A673 (cell line): ENCODE measurements at regions of chr17 and their contacts with region 1.

Region 1: DNA sequence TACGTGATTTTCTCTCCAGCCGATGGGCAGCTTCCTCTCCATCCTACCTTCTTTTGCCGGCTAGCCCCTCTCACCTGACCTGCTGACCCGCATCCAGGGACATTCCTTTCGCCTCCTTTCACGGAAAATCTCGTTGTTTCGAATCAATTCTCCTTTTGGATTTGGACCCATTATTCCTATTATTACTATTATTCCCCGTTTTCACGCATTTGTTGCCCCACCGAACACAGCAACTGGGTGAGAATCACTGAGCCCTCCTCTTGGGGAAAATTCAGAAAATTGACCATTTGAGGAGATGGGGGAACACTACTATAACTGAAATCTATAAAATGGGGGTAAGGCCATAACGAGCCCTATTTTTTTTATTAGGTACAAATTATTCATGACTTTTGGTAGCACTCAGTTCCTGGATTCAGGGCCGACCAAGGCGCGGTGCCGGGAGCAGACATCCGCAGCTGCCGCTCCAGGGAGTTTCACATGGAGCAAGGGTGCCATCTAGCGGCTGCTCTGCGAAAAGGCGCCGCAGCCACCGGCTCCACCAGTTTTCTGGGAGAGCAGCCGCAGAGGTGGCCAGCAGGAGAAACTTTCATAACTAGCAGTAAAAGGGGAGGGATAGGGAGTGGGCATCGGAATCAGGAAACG is 3.3 kb upstream of the HOXB8 start:
- DNase-seq: peak; percentile 93
- H3K4me3 ChIP-seq: peak overlapping the region; percentile 49
- H3K27ac ChIP-seq: no peak overlapping the region
- H3K4me1 ChIP-seq: peaks cover 17% of the 10 kb centered on the region
- H3K27me3 ChIP-seq: no peaks in the 10 kb centered on the region
- CTCF ChIP-seq: peak; percentile 98

Region 2: GRCh38 chr17:48131216-48131824 is 487.1 kb before region 1 on chr17:
- CTCF ChIA-PET with region 1: interaction called, 3 read pairs
- POLR2A ChIA-PET with region 1: no interaction called
- intact Hi-C with region 1: loop called (anchors 2 kb)
- DNase-seq: peak; percentile 86
- H3K4me3 ChIP-seq: no peak overlapping the region
- H3K27ac ChIP-seq: no peak overlapping the region
- H3K4me1 ChIP-seq: no peaks in the 10 kb centered on the region
- H3K27me3 ChIP-seq: no peaks in the 10 kb centered on the region
- CTCF ChIP-seq: peak; percentile 92

Region 3: DNA sequence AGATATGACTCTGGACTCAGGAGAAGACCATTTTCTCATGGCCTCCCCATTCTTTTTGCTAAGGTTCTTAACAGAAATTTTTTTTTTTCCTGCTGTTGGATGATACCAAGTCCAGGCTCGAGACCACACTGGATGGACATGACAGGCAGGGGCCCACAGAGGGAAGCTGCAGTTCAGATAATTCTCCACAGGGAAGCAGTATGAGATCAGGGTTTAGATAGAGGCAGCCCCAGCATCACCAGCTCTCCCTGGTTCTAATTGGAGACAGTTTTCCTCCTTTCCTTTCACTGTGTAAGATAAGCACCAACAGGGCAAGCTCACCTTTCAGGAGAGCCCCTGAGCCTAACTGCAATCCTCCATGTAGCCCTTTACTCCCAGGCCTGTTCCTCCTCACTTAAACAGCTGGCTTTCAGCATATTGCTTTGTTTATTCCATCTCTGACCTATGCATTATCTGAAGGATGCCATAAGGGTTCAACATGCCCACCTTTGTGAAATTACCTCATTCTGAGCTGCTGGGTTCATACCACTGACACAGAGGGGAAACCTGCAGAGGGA is 402.7 kb before region 1 on chr17:
- CTCF ChIA-PET with region 1: no interaction called
- POLR2A ChIA-PET with region 1: no interaction called
- intact Hi-C with region 1: loop called (anchors 1 kb)
- DNase-seq: peak; percentile 74
- H3K4me3 ChIP-seq: no peak overlapping the region
- H3K27ac ChIP-seq: no peak overlapping the region
- H3K4me1 ChIP-seq: peaks cover 4% of the 10 kb centered on the region
- H3K27me3 ChIP-seq: no peaks in the 10 kb centered on the region
- CTCF ChIP-seq: peak; percentile 75

Region 4: GRCh38 chr17:48335858-48336500 is 282.4 kb before region 1 on chr17:
- CTCF ChIA-PET with region 1: interaction called, 3 read pairs
- POLR2A ChIA-PET with region 1: no interaction called
- intact Hi-C with region 1: loop called (anchors 5 kb)
- DNase-seq: peak; percentile 78
- H3K4me3 ChIP-seq: no peak overlapping the region
- H3K27ac ChIP-seq: no peak overlapping the region
- H3K4me1 ChIP-seq: no peaks in the 10 kb centered on the region
- H3K27me3 ChIP-seq: no peaks in the 10 kb centered on the region
- CTCF ChIP-seq: peak; percentile 80

Region 5: DNA sequence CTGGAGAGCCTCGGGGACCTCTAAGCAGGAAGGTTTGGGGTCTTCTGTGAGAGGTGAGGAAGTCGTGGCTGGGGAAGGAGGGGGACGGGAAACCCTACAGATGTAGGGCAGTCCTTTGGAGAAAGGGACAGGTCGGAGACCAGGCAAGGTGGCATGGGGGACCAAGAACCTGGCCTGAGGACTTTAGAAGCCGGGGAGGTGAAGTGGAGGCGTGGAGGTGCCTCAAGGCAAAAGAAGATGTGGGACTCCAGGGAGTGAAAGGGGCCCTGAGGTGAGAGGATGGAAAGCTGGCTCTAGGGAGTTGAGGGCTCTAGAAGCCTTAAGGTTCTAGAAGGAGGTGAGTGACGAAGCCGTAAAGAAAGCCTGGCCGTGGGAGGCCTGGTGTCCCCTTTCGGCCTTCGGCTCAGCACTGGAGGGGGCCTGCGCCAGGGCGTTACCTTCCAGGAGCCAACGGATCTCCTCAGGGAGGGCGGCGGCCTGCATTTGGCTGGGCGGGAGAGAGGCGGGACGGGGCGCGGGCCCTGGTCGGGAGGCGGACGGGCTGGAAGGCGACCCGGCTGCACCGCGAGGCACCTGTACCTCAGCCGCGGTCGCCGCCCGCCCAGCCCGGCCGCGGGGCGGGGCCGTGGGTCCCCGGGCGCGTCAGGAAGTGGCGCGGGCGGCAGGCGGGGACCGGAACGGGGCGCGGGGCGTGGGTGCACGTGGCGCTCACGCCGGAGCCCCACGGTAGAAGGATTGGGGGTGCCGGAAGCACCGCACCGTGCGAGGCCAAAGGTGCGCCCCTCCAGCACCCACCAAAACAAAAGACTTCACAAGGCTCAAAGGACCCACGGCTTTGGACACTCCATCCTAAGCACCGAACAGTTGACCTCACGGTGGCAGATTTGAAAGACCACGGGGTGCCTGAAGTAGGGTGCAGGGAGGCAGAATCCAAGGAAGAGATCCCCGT is 188.5 kb before region 1 on chr17 and contains the start of gene SKAP1:
- CTCF ChIA-PET with region 1: no interaction called
- POLR2A ChIA-PET with region 1: no interaction called
- intact Hi-C with region 1: no loop called
- DNase-seq: no peak
- H3K4me3 ChIP-seq: no peak within 1 kb of the TSS
- H3K27ac ChIP-seq: no peak within 1 kb of the TSS
- H3K4me1 ChIP-seq: no peaks in the 10 kb centered on the region
- H3K27me3 ChIP-seq: no peaks in the 10 kb centered on the region
- CTCF ChIP-seq: no peak
- total RNA-seq, gene SKAP1: not detected in 2 replicates

Region 6: GRCh38 chr17:48646183-48647102 is 28.1 kb after region 1 on chr17:
- CTCF ChIA-PET with region 1: interaction called, 10 read pairs
- POLR2A ChIA-PET with region 1: no interaction called
- intact Hi-C with region 1: no loop called
- DNase-seq: no peak
- H3K4me3 ChIP-seq: peak overlapping the region; percentile 46
- H3K27ac ChIP-seq: no peak overlapping the region
- H3K4me1 ChIP-seq: peaks cover 6% of the 10 kb centered on the region
- H3K27me3 ChIP-seq: peaks cover 19% of the 10 kb centered on the region
- CTCF ChIP-seq: no peak

Region 7: GRCh38 chr17:48663134-48663924 is 45.0 kb after region 1 on chr17:
- CTCF ChIA-PET with region 1: no interaction called
- POLR2A ChIA-PET with region 1: no interaction called
- intact Hi-C with region 1: no loop called
- DNase-seq: peak; percentile 44
- H3K4me3 ChIP-seq: no peak overlapping the region
- H3K27ac ChIP-seq: no peak overlapping the region
- H3K4me1 ChIP-seq: no peaks in the 10 kb centered on the region
- H3K27me3 ChIP-seq: no peaks in the 10 kb centered on the region
- CTCF ChIP-seq: peak; percentile 60